ENCODE measurements at regions of chr19 and their contacts with region 1.

Region 1: DNA sequence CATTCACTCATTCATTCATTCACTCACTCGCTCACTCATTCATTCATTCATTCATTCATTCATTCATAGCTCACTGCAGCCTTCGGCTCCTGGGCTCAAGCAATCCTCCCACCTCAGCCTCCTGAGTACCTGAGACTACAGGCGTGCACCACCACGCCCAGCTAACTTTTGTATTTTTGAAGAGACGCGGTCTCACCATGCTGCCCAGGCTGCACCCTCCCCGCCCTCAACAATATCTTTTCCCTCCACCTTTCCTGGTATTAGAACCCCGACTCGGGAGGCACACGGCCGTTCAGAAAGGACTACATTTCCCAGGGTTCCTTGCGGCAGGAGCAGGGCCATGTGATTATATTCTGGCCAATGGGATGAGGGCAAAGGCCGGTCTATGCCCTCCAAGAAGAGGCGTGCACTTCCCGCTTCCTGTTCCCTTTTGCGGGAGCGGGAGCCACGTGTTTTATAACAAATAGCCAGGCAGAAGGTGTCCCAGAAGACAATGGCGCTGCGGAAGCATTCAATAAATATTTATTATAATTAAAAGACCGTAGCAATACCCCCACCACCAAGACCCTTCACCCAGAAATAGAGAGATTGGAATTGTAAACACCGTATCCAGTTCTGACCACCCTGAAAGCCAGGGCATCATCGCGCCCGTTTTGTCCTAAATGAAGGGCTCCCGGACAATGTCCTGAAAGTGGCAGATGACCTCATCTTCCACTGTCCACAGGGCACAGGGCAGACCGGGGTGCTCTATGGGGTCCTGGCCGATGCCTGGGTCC is 15.9 kb downstream of the TICAM1 start:
- DNase-seq: peak; percentile 98 to 99 (median 99)
- ATAC-seq: peak; percentile 96
- H3K4me3 ChIP-seq: peak overlapping the region; percentile 27
- H3K27ac ChIP-seq: peak overlapping the region; percentile 77
- H3K4me1 ChIP-seq: peaks cover 10 to 35% of the 10 kb centered on the region in 2 experiments; a peak in 4 of 5 replicates
- H3K27me3 ChIP-seq: no peaks in the 10 kb centered on the region
- CTCF ChIP-seq: no peak
- EP300 ChIP-seq: no peak
- POLR2A ChIP-seq: peak; percentile 62
- RAD21 ChIP-seq: no peak

Region 2: DNA sequence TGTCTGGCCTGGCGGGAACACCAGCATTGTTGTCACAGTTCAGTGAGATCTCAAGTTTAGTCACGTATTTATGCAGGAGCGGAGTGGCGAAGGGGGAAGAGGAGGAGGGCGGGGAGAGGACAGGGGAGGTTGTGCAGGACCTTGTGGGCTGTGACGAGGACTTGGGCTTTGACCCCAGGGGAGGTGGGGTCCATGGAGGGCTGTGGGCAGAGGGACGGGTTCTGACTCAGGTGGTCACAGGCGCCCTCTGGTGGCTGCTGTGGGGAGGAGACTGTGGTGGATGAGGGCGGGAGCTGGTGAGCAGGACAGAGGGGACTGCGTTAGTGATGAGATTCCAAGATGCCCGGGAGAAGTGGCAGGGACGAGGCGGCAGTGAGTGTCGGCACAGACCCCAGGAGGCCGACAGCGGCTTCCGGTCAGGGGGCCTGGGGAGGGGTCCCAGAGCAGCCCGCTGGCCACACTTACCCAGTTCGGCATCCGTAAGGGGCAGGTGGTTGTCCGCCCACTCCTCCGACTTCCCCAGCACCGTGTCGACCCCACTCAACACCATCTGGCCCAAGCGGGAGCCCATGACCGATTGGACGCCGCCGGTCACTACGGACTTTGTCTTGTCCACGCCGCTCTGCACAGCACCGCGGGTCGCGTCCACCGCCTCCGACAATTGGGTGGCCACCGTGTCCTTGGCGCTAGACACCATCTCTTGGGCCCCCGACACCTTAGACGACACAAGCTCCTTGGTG is 36.1 kb after region 1 on chr19:
- CTCF ChIA-PET with region 1: interaction called, 7 read pairs
- POLR2A ChIA-PET with region 1: no interaction called
- in situ Hi-C with region 1: no loop called
- intact Hi-C with region 1: loop called (anchors 1 kb)
- DNase-seq: peak; percentile 71 to 82 (median 74)
- ATAC-seq: peak; percentile 96
- H3K4me3 ChIP-seq: no peak overlapping the region
- H3K27ac ChIP-seq: no peak overlapping the region
- H3K4me1 ChIP-seq: peaks cover 0 to 10% of the 10 kb centered on the region in 2 experiments; a peak in 2 of 5 replicates
- H3K27me3 ChIP-seq: no peaks in the 10 kb centered on the region
- CTCF ChIP-seq: peak; percentile 79 to 85 (median 85)
- EP300 ChIP-seq: no peak
- POLR2A ChIP-seq: no peak
- RAD21 ChIP-seq: peak; percentile 32 to 65

Region 3: GRCh38 chr19:4867534-4868285 is 52.1 kb after region 1 on chr19 and contains the start of gene PLIN3:
- CTCF ChIA-PET with region 1: no interaction called
- POLR2A ChIA-PET with region 1: interaction called, 3 read pairs
- in situ Hi-C with region 1: no loop called
- intact Hi-C with region 1: loop called (anchors 5 kb)
- DNase-seq: peak; percentile 96 to 100 (median 100)
- ATAC-seq: peak; percentile 92
- H3K4me3 ChIP-seq: peak within 1 kb of the TSS; percentile 59
- H3K27ac ChIP-seq: peak within 1 kb of the TSS; percentile 80
- H3K4me1 ChIP-seq: peaks cover 16 to 35% of the 10 kb centered on the region in 2 experiments
- H3K27me3 ChIP-seq: no peaks in the 10 kb centered on the region
- CTCF ChIP-seq: no peak
- EP300 ChIP-seq: no peak
- POLR2A ChIP-seq: peak; percentile 67; the same call in 1 of the 2 replicates
- RAD21 ChIP-seq: no peak
- polyA plus RNA-seq, gene PLIN3: 7.5 to 9.8 TPM

Region 4: GRCh38 chr19:4909897-4910593 is 94.4 kb after region 1 on chr19:
- CTCF ChIA-PET with region 1: interaction called, 37 read pairs
- POLR2A ChIA-PET with region 1: interaction called, 4 read pairs
- in situ Hi-C with region 1: no loop called
- intact Hi-C with region 1: no loop called
- DNase-seq: peak; percentile 96 to 98 (median 96)
- ATAC-seq: peak; percentile 94
- H3K4me3 ChIP-seq: peak overlapping the region; percentile 93
- H3K27ac ChIP-seq: peak overlapping the region; percentile 87
- H3K4me1 ChIP-seq: peaks cover 33 to 46% of the 10 kb centered on the region in 2 experiments
- H3K27me3 ChIP-seq: no peaks in the 10 kb centered on the region
- CTCF ChIP-seq: no peak
- EP300 ChIP-seq: no peak
- POLR2A ChIP-seq: no peak
- RAD21 ChIP-seq: no peak

Region 5: GRCh38 chr19:5006201-5006600 is 190.6 kb after region 1 on chr19:
- CTCF ChIA-PET with region 1: no interaction called
- POLR2A ChIA-PET with region 1: no interaction called
- in situ Hi-C with region 1: no loop called
- intact Hi-C with region 1: no loop called
- DNase-seq: peak in 1 of 4 experiments; percentile 27
- ATAC-seq: no peak
- H3K4me3 ChIP-seq: no peak overlapping the region
- H3K27ac ChIP-seq: no peak overlapping the region
- H3K4me1 ChIP-seq: peaks cover 0 to 14% of the 10 kb centered on the region in 2 experiments; a peak in 2 of 5 replicates
- H3K27me3 ChIP-seq: no peaks in the 10 kb centered on the region
- CTCF ChIP-seq: no peak
- EP300 ChIP-seq: no peak
- POLR2A ChIP-seq: no peak
- RAD21 ChIP-seq: no peak

Region 6: DNA sequence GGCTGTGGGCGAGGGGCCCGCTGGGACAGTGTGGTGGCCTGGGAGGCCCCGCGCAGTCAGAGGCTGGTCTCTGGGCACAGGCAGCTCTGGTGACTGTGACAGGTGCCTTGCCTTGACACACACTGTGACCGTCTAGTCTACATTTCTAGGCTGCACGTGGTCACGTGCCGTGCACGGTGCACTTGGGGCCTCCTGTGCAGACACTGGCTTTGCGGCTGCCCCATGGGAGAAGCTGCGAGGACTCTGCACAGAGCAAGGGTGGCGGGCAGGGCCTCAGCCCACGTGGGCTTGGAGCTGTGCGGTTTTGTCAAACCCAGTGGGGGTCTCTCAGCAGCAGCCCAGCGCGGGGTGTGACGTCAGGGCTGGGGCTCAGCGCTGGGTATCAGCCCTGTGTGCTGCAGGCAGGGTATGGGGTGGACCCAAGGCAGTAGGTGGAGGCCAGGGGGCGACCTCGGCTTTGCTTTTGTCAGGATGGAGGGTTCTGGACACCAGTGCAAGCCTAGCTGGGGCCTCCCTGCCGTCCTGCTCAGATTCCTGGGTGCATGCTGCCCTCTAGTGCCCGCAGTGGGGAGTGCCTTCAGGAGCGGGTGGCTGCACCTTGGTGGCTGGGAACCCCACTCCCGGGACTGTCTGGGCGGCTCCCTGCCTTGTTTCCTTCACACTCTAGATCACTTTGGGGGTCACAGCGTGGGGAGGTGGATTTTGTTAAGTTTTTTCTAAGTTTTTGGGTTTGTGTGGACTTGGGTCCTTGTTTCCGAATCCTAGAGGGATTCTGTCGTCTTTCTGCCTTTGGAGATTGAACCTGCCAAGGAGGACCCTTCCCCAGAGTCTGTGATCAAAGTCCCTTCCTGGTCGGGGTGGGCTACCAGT is 215.9 kb after region 1 on chr19:
- CTCF ChIA-PET with region 1: interaction called, 47 read pairs
- POLR2A ChIA-PET with region 1: interaction called, 4 read pairs
- in situ Hi-C with region 1: no loop called
- intact Hi-C with region 1: no loop called
- DNase-seq: peak; percentile 85 to 92 (median 90)
- ATAC-seq: peak; percentile 97
- H3K4me3 ChIP-seq: no peak overlapping the region
- H3K27ac ChIP-seq: no peak overlapping the region
- H3K4me1 ChIP-seq: peaks cover 0 to 46% of the 10 kb centered on the region in 2 experiments; a peak in 3 of 5 replicates
- H3K27me3 ChIP-seq: no peaks in the 10 kb centered on the region
- CTCF ChIP-seq: peak; percentile 92 to 94 (median 94)
- EP300 ChIP-seq: no peak
- POLR2A ChIP-seq: no peak
- RAD21 ChIP-seq: peak; percentile 75 to 87